Activated B cell treated with CpG ODN at 0.5 μM for 24 hours (primary cell): ENCODE measurements at regions of chr12 and their contacts with region 1.

Region 1: DNA sequence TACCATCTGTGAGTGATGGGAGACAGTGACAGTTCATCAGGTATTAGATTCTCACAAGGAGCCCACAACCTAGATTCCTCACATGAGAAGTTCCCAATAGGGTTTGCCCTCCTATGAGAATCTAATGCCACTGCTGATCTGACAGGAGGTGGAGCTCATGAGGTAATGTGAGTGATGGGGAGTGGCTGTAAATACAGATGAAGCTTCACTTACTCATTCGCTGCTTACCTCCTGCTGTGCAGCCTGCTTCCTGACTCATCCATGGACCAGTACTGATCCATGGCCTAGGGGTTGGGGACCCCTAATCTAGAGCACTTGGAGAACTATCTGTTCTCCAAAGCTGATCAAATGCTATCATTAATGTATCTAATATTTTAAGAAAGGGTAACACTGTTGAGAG is 17.7 kb downstream of the CLEC2D start:
- DNase-seq: no peak
- ATAC-seq: peak; percentile 29
- H3K4me3 Mint-ChIP-seq: no peak overlapping the region
- H3K27ac Mint-ChIP-seq: no peak overlapping the region
- H3K4me1 Mint-ChIP-seq: peaks cover 61% of the 10 kb centered on the region
- H3K27me3 Mint-ChIP-seq: no peaks in the 10 kb centered on the region
- CTCF ChIP-seq: no peak

Region 2: DNA sequence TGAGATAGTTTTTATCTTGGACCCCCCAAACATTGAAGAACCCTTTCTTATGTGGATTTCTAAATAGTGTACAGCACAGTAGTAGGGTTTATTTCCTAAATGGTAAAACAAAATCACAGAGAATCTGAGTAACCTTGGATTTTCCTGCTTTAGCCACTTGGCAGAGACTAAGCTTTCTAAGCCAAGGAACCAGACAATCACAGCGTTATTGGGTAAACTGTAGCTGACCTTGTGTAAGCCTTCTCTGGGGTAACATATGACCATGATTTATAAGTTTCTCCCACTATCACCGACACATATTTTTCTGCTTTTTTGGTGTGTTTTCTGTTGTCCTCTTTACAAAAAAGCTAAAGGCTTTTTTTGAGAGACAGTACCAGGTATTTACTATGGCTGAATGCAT is 342.7 kb before region 1 on chr12:
- CTCF ChIA-PET with region 1: no interaction called
- POLR2A ChIA-PET with region 1: interaction called, 17 read pairs
- intact Hi-C with region 1: no loop called
- DNase-seq: no peak
- ATAC-seq: no peak
- H3K4me3 Mint-ChIP-seq: no peak overlapping the region
- H3K27ac Mint-ChIP-seq: no peak overlapping the region
- H3K4me1 Mint-ChIP-seq: no peaks in the 10 kb centered on the region
- H3K27me3 Mint-ChIP-seq: no peaks in the 10 kb centered on the region
- CTCF ChIP-seq: no peak

Region 3: GRCh38 chr12:9667403-9668160 is 19.6 kb before region 1 on chr12:
- CTCF ChIA-PET with region 1: interaction called, 4 read pairs
- POLR2A ChIA-PET with region 1: interaction called, 41 read pairs
- intact Hi-C with region 1: loop called (anchors 2 kb)
- DNase-seq: no peak
- ATAC-seq: peak; percentile 46
- H3K4me3 Mint-ChIP-seq: peak overlapping the region; percentile 95
- H3K27ac Mint-ChIP-seq: peak overlapping the region; percentile 96
- H3K4me1 Mint-ChIP-seq: peaks cover 76% of the 10 kb centered on the region
- H3K27me3 Mint-ChIP-seq: no peaks in the 10 kb centered on the region
- CTCF ChIP-seq: no peak

Region 4: DNA sequence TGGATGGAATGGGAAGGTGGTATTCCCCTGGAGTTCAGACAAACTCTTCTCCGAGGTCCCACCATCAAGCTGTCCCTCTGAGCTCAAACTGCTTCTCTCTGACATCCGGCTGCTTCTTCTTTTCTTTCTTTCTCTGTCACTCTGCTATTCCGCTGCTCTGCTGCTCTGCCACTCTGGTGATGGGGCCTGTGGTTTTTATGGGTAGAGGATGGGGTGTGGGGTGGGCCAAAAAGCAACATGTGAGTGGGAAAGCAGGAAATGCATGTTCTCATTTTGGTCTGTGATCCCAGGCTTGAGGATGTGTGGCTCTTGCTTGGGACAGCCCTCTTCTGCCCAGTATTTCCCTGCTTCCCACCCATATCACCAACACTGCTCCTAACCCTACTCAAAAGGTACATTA is 15.0 kb after region 1 on chr12:
- CTCF ChIA-PET with region 1: interaction called, 3 read pairs
- POLR2A ChIA-PET with region 1: interaction called, 12 read pairs
- intact Hi-C with region 1: no loop called
- DNase-seq: no peak
- ATAC-seq: peak; percentile 41
- H3K4me3 Mint-ChIP-seq: peak overlapping the region; percentile 65
- H3K27ac Mint-ChIP-seq: peak overlapping the region; percentile 85
- H3K4me1 Mint-ChIP-seq: peaks cover 85% of the 10 kb centered on the region
- H3K27me3 Mint-ChIP-seq: no peaks in the 10 kb centered on the region
- CTCF ChIP-seq: no peak